Activated CD4-positive, alpha-beta T cell treated with anti-CD3 and anti-CD28 coated beads, Interleukin-2, amount 10 ng/mL, durations not matched to agents 24 days and 14 days (primary cell): ENCODE measurements at regions of chr1 and their contacts with region 1.

Region 1: DNA sequence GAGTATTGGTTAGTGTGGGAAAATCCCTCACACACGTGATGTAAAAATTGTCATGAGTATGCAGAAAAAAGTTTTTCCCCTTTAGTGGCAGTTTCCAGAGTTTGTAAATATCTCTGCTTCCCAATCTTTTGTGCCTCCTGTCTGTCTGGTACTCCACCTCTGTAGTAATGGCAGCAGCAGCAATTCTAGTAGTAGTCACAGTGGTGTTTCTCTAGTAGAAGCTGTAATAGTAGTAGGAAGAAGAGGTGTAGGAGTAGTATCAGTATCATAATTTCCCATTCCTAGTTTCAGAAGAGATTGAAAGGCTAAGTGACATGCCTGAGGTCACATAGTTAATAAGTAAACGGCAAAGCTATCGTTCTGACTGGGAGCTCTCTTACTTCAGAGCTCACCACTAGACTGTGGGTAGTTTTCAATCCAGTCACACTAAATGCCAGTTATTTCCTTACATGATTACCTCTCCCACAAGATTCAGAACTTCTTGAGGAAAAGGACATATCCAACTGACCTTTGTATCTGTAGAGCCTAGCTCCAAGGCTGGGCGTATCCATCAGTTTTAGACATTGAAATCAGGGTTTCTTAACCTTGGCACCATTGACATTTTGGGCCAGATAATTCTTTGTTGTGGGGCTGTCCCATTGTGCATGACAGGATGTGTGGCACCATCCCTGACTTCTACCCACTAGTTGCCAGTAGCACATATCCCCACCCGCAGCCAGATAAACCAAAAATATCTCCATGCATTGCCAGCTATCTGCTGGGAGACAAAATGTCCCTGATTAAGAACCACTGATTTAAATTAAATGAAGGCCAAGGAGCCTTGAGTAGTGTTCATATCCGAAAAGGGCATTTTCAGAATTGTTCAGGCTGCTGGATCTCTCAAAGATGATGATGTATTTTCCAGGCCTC is 135.9 kb downstream of the FGGY start:
- DNase-seq: peak; percentile 53
- H3K4me3 Mint-ChIP-seq: no peak overlapping the region
- H3K27ac Mint-ChIP-seq: peak overlapping the region; percentile 38
- H3K4me1 Mint-ChIP-seq: peaks cover 34% of the 10 kb centered on the region
- H3K27me3 Mint-ChIP-seq: no peaks in the 10 kb centered on the region

Region 2: GRCh38 chr1:59046730-59047157 is 386.0 kb before region 1 on chr1:
- intact Hi-C with region 1: loop called (anchors 2 kb)
- DNase-seq: peak; percentile 89
- H3K4me3 Mint-ChIP-seq: peak overlapping the region; percentile 76
- H3K27ac Mint-ChIP-seq: peak overlapping the region; percentile 96
- H3K4me1 Mint-ChIP-seq: peaks cover 60% of the 10 kb centered on the region
- H3K27me3 Mint-ChIP-seq: no peaks in the 10 kb centered on the region

Region 3: DNA sequence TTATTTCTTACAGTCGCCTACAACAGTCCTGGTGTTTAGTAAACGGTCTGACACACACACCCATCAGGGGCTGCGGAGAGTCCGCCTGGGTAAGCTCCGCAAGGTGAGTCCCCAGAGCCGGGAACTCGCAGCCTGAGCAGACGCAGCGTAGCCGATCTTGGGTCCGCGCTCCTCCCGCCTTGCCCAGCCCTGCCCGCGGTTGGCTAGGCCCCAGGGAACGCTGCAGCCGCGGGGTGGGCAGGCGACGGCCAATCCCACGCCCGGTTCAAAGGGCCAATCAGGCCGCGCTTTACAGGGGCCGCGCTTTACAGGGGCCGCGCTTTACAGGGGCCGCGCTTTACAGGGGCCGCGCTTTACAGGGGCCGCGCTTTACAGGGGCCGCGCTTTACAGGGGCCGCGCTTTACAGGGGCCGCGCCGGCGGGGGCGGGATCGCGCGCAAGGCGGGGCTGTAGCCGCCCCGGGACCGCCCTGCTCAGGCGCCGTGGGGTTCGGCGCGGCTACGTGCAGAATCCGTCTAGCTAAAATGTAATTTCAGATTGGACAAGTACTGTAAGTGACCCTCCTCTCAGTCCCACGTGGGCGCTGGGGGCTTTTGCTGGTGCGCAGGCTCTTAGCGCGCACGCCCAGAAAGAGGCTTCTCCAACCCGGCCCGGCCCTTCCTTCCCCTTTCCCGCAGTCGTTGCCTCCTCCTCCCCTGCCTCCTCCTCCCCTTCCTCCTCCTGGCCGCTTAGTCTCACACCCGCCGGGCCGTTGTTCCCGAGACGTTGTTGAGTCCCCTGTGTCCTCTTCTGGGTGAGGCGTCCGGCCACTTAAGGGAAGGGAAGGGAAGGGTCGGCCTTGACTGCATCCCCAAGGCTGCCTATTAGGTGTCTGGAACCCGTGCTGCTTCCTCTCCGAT is 136.2 kb before region 1 on chr1 and contains the start of gene FGGY:
- intact Hi-C with region 1: loop called (anchors 10 kb)
- DNase-seq: peak; percentile 96
- H3K4me3 Mint-ChIP-seq: peak within 1 kb of the TSS; percentile 85
- H3K27ac Mint-ChIP-seq: peak within 1 kb of the TSS; percentile 91
- H3K4me1 Mint-ChIP-seq: peaks cover 36% of the 10 kb centered on the region
- H3K27me3 Mint-ChIP-seq: no peaks in the 10 kb centered on the region
- total RNA-seq, gene FGGY: 6.2 and 8.1 TPM in 2 replicates

Region 4: GRCh38 chr1:59354709-59355337 is 78.0 kb before region 1 on chr1:
- intact Hi-C with region 1: loop called (anchors 1 kb)
- DNase-seq: no peak
- H3K4me3 Mint-ChIP-seq: no peak overlapping the region
- H3K27ac Mint-ChIP-seq: peak overlapping the region; percentile 91
- H3K4me1 Mint-ChIP-seq: peaks cover 14% of the 10 kb centered on the region
- H3K27me3 Mint-ChIP-seq: no peaks in the 10 kb centered on the region

Region 5: GRCh38 chr1:59484096-59484495 is 51.3 kb after region 1 on chr1:
- intact Hi-C with region 1: no loop called
- DNase-seq: no peak
- H3K4me3 Mint-ChIP-seq: no peak overlapping the region
- H3K27ac Mint-ChIP-seq: no peak overlapping the region
- H3K4me1 Mint-ChIP-seq: peaks cover 6% of the 10 kb centered on the region
- H3K27me3 Mint-ChIP-seq: no peaks in the 10 kb centered on the region

Region 6: GRCh38 chr1:59699227-59699847 is 266.6 kb after region 1 on chr1:
- intact Hi-C with region 1: loop called (anchors 2 kb)
- DNase-seq: peak; percentile 80
- H3K4me3 Mint-ChIP-seq: no peak overlapping the region
- H3K27ac Mint-ChIP-seq: no peak overlapping the region
- H3K4me1 Mint-ChIP-seq: peaks cover 26% of the 10 kb centered on the region
- H3K27me3 Mint-ChIP-seq: peaks cover 2% of the 10 kb centered on the region